RWPE1 (cell line): ENCODE measurements at regions of chr13 and their contacts with region 1.

Region 1: GRCh38 chr13:38866649-38867048 is 124.0 kb downstream of the STOML3 start:
- DNase-seq: peak; percentile 29
- H3K27ac ChIP-seq: no peak overlapping the region
- CTCF ChIP-seq: no peak

Region 2: DNA sequence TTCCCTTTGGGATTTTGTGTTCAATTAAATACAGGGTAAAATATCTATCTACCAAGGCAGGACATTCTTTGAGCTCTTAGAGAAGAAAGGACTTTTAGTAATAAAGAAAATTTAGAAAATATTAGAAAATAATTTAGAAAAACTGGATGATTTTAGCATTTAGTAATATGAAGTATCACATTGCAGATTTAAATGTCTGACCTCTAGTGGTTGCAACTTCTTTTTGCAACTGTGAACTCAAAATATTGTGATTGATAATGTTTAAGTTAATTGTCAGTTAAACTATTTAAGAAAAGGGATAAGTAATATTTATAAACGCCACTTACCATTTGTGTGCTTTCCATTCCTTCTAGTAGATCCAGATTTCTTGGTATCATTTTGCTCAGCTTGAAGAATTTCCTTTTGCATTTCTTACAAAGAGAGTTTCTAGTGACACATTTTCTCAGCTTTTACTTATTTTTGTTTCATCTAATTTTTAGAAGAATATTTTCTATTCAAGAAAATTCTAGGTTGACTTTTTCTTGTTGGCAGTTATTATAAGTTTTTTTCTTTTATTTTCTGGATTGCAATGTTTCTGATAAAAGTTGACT is 1257.8 kb before region 1 on chr13:
- CTCF ChIA-PET with region 1: no interaction called
- POLR2A ChIA-PET with region 1: no interaction called
- DNase-seq: no peak
- H3K27ac ChIP-seq: no peak overlapping the region
- CTCF ChIP-seq: peak; percentile 60

Region 3: GRCh38 chr13:38914070-38914469 is 47.4 kb after region 1 on chr13:
- CTCF ChIA-PET with region 1: interaction called, 18 read pairs
- POLR2A ChIA-PET with region 1: no interaction called
- DNase-seq: no peak
- H3K27ac ChIP-seq: no peak overlapping the region
- CTCF ChIP-seq: no peak